ENCODE measurements at regions of chr20 and their contacts with region 1.

Region 1: DNA sequence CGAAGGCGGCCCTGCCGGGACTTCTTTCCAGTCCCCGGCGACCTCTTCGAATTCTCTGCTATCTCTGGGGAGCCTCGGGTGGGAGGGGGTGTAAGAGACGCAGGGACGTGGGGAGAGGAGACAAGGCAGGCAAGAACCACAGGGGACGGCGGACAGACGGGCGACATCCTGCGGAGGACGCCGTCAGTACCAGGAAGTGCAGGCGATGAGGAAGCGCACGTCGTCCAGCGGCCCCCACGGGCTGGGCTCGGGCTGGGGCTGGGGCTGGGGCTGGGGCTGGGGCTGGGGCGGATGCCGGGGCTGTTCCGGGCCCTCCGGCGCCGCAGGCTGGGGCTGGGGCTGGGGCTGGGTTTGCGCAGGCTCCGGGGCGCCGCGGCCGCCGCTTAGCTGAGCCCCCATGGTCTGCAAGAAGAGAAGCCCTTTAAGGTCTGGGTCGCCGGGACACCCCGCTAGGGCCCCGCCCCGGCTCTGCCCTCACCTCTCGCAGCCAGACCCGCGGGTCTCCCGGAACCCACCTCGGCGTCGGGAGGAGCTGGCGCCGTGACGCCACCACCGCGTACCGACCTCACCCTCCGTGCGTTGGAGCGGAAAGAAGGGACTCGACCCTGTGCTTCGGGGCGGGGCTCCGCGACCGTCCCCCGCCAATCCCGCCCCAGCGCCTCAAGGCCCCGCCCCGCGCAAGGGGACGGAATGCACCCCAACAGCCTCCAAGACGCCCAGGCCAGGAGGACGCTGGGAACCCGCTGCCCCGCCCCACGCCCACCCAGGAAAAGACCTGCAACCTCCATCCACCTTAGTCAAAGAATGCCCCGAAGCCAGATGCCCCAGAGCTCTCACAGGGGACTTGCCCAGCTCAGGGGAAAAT is at the start of gene MMP24OS:
- DNase-seq: no peak
- H3K4me3 ChIP-seq: peak within 1 kb of the TSS; percentile 83
- CTCF ChIP-seq: peak; percentile 48

Region 2: GRCh38 chr20:35437491-35437998 is 159.8 kb after region 1 on chr20:
- CTCF ChIA-PET with region 1: interaction called, 53 read pairs
- POLR2A ChIA-PET with region 1: interaction called, 10 read pairs
- DNase-seq: no peak
- H3K4me3 ChIP-seq: peak overlapping the region; percentile 68
- CTCF ChIP-seq: no peak

Measured in AG04449 (cell line).